ENCODE measurements at regions of chr3 and their contacts with region 1.

Region 1: GRCh38 chr3:119498186-119498987 is at the start of gene TIMMDC1:
- DNase-seq: peak; percentile 96
- ATAC-seq: peak; percentile 98
- H3K4me3 Mint-ChIP-seq: peak within 1 kb of the TSS; percentile 99
- H3K27ac Mint-ChIP-seq: peak within 1 kb of the TSS; percentile 97
- H3K4me1 Mint-ChIP-seq: peaks cover 38% of the 10 kb centered on the region
- H3K27me3 Mint-ChIP-seq: no peaks in the 10 kb centered on the region
- CTCF ChIP-seq: no peak
- total RNA-seq, gene TIMMDC1: 73.0 and 76.1 TPM in 2 replicates

Region 2: DNA sequence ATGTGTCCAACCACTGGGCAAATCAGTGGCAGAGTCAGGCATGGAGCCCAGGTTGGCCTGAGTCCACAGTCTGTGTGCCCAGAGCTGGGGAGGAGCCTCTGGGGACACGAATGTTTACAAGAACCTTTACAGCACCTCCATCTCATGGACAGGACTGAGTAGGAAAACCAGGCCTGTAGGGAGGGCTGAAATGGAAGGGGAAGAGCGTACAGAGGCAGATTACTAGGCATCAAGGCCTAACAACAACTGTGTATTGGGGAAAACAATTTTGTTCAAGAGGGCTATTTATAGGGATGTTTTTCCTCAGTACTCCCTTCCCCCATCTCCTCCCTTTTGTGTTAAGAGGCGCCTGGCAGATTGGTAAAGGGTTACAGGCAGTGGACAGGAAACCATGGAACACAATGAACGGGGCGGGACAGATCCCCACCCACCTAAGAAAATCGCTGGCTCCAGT is 219.3 kb before region 1 on chr3:
- CTCF ChIA-PET with region 1: interaction called, 3 read pairs
- POLR2A ChIA-PET with region 1: no interaction called
- intact Hi-C with region 1: loop called (anchors 1 kb)
- DNase-seq: no peak
- ATAC-seq: no peak
- H3K4me3 Mint-ChIP-seq: no peak overlapping the region
- H3K27ac Mint-ChIP-seq: no peak overlapping the region
- H3K4me1 Mint-ChIP-seq: peaks cover 3% of the 10 kb centered on the region
- H3K27me3 Mint-ChIP-seq: no peaks in the 10 kb centered on the region
- CTCF ChIP-seq: no peak

Region 3: DNA sequence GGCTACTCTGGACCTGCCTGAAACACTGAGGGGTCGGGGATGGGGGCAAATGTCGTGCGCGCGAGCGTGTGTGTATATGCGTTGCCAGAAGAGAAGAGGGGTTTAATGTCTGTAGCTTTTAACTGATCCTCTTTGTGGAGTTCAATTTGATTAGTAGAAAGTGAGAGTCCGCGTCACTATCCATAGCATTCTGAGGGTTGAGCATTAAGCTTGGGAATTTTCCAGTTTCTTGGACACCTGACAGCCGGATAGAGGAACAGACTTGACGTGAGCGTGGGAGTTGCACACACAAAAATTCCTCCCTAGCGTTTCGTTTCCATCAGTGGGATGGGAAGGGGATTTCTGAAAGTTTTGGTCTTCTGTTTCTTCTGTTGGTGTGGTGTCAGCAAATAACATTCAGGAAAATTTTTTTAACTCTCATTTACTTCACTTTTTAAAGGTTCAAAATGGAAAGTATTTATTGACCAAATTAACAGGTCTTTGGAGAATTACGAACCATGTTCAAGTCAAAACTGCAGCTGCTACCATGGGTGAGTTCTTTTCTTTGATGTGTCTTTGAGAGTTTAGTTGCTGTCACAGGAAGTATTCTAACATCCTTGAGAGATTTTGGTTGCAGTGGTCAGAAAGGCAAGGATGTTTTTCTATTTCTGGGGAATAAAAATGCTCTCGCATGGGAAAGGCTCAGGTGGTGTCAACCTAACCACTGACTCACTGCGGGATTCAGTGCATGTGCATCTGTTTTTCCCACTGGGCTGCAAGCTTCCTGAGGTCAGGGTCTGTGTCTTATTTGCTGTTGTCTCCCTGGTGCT is 28.8 kb before region 1 on chr3:
- CTCF ChIA-PET with region 1: no interaction called
- POLR2A ChIA-PET with region 1: interaction called, 102 read pairs
- intact Hi-C with region 1: loop called (anchors 1 kb)
- DNase-seq: no peak
- ATAC-seq: peak; percentile 45
- H3K4me3 Mint-ChIP-seq: peak overlapping the region; percentile 93
- H3K27ac Mint-ChIP-seq: peak overlapping the region; percentile 90
- H3K4me1 Mint-ChIP-seq: peaks cover 32% of the 10 kb centered on the region
- H3K27me3 Mint-ChIP-seq: no peaks in the 10 kb centered on the region
- CTCF ChIP-seq: no peak

Region 4: DNA sequence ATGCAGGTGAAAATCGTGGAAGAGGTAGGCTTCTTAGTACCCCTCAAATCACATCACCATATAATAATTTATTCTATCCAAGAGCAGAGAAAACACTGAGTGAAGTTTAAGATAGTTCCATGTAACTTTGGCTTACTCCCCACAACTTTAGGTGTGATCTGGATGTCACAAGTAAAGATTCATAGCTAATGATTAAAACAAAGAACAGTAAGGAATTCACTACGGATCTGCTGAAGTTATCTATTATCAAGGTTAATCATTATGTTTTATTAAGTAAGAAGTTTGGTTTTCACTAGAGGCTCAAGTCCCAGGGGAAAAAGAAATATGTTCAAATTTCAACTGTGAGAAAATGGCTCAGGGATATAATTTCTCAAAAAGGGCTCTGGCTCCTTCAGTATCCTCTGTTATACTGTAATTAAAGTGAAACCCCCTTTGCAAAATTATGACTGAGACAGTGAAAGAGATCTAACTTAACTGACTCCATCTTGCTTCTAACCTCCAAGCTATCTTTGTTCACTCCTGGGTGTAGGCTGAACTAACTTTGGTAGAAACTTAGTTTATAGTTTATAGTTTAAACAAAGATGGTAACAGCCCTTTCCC is 43.9 kb after region 1 on chr3:
- CTCF ChIA-PET with region 1: no interaction called
- POLR2A ChIA-PET with region 1: interaction called, 18 read pairs
- intact Hi-C with region 1: loop called (anchors 2 kb)
- DNase-seq: no peak
- ATAC-seq: no peak
- H3K4me3 Mint-ChIP-seq: peak overlapping the region; percentile 33
- H3K27ac Mint-ChIP-seq: peak overlapping the region; percentile 77
- H3K4me1 Mint-ChIP-seq: peaks cover 79% of the 10 kb centered on the region
- H3K27me3 Mint-ChIP-seq: no peaks in the 10 kb centered on the region
- CTCF ChIP-seq: no peak

Region 5: DNA sequence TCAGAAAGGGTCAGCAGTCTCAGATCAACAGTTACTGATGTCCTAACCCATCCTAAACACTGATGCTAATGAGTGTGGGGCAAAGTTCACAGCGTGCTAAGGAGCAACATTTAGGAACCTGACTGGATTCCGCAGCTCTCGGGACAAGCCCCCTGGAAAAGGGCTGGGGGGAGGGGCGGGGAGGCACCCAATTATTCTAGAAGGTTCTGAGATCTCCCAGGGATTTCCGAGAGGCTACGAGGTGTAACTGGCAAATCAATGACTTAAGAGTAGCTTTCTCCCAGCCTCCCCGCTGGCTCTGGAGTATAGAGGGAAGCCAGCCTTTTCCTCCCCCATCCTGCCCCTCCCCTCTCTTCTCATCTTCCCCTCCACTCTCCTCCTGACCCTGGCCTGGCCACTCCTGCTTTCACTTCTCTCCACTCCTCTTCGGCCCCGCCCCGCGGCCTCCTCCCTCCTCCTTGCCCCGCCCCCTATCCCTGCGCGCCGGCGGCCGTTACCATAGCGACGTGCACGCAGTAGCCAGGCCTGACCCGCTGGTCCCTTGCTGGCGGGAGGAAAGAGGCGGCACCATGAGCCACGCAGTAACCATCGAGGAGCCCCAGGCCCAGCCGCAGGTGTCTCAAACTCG is 204.3 kb after region 1 on chr3 and contains the start of gene CFAP91:
- CTCF ChIA-PET with region 1: no interaction called
- POLR2A ChIA-PET with region 1: interaction called, 6 read pairs
- intact Hi-C with region 1: loop called (anchors 1 kb)
- DNase-seq: peak; percentile 86
- ATAC-seq: peak; percentile 92
- H3K4me3 Mint-ChIP-seq: peak within 1 kb of the TSS; percentile 86
- H3K27ac Mint-ChIP-seq: peak within 1 kb of the TSS; percentile 72
- H3K4me1 Mint-ChIP-seq: peaks cover 52% of the 10 kb centered on the region
- H3K27me3 Mint-ChIP-seq: no peaks in the 10 kb centered on the region
- CTCF ChIP-seq: no peak
- total RNA-seq, gene CFAP91: 8.5 and 12.9 TPM in 2 replicates

Region 6: GRCh38 chr3:119819806-119820205 is 321.4 kb after region 1 on chr3:
- CTCF ChIA-PET with region 1: no interaction called
- POLR2A ChIA-PET with region 1: no interaction called
- intact Hi-C with region 1: no loop called
- DNase-seq: no peak
- ATAC-seq: no peak
- H3K4me3 Mint-ChIP-seq: no peak overlapping the region
- H3K27ac Mint-ChIP-seq: no peak overlapping the region
- H3K4me1 Mint-ChIP-seq: no peaks in the 10 kb centered on the region
- H3K27me3 Mint-ChIP-seq: no peaks in the 10 kb centered on the region
- CTCF ChIP-seq: no peak

Measured in activated B cell treated with CpG ODN at 0.5 μM for 24 hours (primary cell).